Gastrocnemius medialis (tissue), 4 donors: ENCODE measurements at regions of chr14 and their contacts with region 1.

Region 1: DNA sequence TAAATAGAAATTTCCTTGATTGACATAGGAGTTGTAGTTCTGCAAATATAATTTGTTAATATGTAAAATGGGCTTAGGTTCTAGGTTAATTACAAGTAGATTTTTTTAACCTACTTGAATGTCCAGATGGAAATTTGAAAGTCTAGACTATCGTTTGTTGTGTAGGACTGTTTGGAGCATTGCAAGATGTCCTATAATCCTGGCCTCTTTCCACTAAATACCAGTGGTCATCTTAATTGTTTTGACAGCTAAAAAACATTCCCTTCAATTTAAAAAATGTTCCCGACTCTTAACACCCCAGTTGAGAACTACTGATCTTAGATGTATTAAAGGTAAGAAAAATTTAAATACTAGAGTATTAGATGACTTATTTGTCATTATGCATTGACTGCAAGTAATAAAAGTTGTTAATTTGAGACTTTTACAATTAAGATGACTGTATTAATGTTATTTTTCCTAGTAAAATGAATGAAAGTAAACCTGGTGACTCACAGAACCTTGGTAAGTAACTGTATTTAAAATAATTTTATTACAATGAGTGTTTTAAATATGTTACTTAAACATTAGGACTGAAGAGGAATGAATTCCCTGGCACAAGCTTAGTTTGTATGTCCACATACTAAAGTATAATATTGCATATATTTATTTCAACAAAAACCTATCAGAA is 21.8 kb downstream of the G2E3 start:
- DNase-seq: no peak
- ATAC-seq: no peak
- H3K4me3 ChIP-seq: no peak overlapping the region
- H3K27ac ChIP-seq: no peak overlapping the region
- H3K4me1 ChIP-seq: no peaks in the 10 kb centered on the region
- H3K27me3 ChIP-seq: no peaks in the 10 kb centered on the region
- CTCF ChIP-seq: no peak
- POLR2A ChIP-seq: no peak

Region 2: GRCh38 chr14:30569216-30569902 is 11.4 kb before region 1 on chr14:
- in situ Hi-C with region 1: no loop called
- intact Hi-C with region 1: loop called (anchors 2 kb)
- DNase-seq: no peak
- ATAC-seq: no peak
- H3K4me3 ChIP-seq: no peak overlapping the region
- H3K27ac ChIP-seq: no peak overlapping the region
- H3K4me1 ChIP-seq: peaks cover 0 to 13% of the 10 kb centered on the region in 2 donors
- H3K27me3 ChIP-seq: no peaks in the 10 kb centered on the region
- CTCF ChIP-seq: no peak
- POLR2A ChIP-seq: no peak

Region 3: GRCh38 chr14:30808576-30808975 is 227.8 kb after region 1 on chr14:
- in situ Hi-C with region 1: no loop called
- intact Hi-C with region 1: no loop called
- DNase-seq: no peak
- ATAC-seq: no peak
- H3K4me3 ChIP-seq: no peak overlapping the region
- H3K27ac ChIP-seq: no peak overlapping the region
- H3K4me1 ChIP-seq: no peaks in the 10 kb centered on the region
- H3K27me3 ChIP-seq: no peaks in the 10 kb centered on the region
- CTCF ChIP-seq: no peak
- POLR2A ChIP-seq: no peak

Region 4: DNA sequence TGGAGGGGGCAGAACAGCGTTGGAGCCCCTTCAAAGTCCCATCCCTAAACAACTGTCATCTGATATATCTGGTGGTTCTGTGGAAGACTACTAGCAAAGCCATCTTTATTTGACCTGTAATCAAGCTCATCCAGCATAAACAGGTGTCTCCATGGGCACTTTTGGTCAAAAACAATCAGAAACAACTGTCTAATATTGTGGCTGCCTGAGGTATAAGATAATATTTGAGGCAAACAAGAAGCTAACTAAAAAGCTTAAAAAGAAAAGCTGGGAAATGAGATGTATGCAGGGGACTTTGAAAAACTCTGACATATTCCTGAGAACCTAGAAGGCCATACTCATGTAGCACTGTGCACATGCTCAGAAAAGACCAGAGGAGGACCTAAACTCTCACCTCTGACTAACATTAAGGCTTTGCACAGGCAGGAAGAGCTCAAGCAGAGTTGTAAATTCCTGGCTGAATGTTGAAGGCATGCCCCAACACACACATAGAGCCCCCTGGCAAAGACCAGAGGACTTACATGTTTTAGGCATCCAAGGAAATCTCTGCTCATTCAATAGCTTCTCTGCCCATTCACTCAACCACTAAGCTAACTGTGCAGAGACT is 417.5 kb after region 1 on chr14:
- in situ Hi-C with region 1: no loop called
- intact Hi-C with region 1: no loop called
- DNase-seq: no peak
- ATAC-seq: no peak
- H3K4me3 ChIP-seq: no peak overlapping the region
- H3K27ac ChIP-seq: no peak overlapping the region
- H3K4me1 ChIP-seq: peaks cover 41 to 42% of the 10 kb centered on the region in 2 donors
- H3K27me3 ChIP-seq: no peaks in the 10 kb centered on the region
- CTCF ChIP-seq: no peak
- POLR2A ChIP-seq: no peak